Dendritic cell treated with granulocyte-macrophage colony-stimulating factor and Interleukin-4, amounts not matched to agents 40 ng/mL and 50 ng/mL, for 4 days (primary cell): ENCODE measurements at regions of chr2 and their contacts with region 1.

Region 1: GRCh38 chr2:217713395-217714286 is 289.2 kb downstream of the TNS1 start:
- H3K4me3 Mint-ChIP-seq: no peak overlapping the region
- H3K27ac Mint-ChIP-seq: no peak overlapping the region
- H3K4me1 Mint-ChIP-seq: peaks cover 24% of the 10 kb centered on the region
- H3K27me3 Mint-ChIP-seq: peaks cover 53% of the 10 kb centered on the region

Region 2: DNA sequence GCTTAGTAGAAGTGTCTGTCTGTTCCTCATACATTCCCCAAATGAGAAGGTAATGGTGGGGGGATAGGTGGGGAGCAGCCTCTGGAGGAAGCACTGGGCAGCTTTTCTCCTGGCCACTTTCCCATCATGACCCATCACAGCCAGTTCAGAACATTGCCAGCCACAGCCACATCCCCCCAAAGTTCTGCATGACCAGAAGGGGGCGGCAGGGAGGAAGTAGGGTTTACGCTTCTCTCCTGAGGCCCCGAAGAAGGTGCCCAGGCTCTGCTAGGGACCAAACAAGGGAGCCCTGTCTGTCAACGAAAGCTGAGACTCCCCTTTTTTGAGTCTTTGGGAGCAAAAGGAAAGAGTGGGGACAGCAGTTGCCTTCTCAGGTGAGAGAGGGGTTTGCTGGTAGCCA is 1026.0 kb before region 1 on chr2:
- intact Hi-C with region 1: loop called (anchors 5 kb)
- H3K4me3 Mint-ChIP-seq: no peak overlapping the region
- H3K27ac Mint-ChIP-seq: no peak overlapping the region
- H3K4me1 Mint-ChIP-seq: peaks cover 21% of the 10 kb centered on the region
- H3K27me3 Mint-ChIP-seq: peaks cover 69% of the 10 kb centered on the region

Region 3: GRCh38 chr2:217650716-217651360 is 62.8 kb before region 1 on chr2:
- intact Hi-C with region 1: loop called (anchors 1 kb)
- H3K4me3 Mint-ChIP-seq: no peak overlapping the region
- H3K27ac Mint-ChIP-seq: no peak overlapping the region
- H3K4me1 Mint-ChIP-seq: peaks cover 12% of the 10 kb centered on the region
- H3K27me3 Mint-ChIP-seq: peaks cover 12% of the 10 kb centered on the region

Region 4: DNA sequence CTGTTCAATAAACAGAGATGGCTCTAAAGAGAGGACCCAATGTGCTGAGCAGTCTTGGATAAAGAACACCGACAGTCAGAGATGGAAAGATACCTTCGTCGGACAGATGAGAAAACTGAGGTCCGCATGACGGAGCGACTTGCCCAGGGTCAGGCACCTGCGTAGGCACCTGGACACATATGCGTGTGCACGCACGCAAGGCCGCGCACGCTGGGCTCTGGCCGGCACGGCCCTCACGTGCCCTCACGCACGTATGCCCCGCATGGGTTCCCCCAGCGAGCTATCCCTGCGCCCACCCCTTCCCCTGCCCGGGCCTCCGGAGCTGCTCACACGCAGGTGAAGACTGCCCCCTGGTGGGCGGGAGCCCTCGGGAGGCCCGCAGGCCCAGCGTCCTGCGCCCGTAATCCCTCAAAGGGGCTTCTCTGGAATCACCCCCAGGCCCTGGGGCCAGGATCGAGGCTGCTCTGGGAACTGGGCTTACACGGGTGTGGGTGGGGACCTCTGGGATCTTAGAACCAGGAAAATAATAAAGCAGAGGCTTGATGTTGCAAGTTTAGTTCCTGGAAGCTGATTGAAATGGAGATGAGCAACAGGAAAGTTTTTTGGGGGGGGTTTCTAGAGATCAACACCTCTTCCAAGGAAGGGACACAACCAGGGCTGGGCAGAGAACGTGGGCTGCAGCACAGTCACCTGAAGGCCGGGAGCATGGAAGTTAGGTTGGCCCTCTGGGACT is 42.9 kb after region 1 on chr2:
- intact Hi-C with region 1: loop called (anchors 5 kb)
- H3K4me3 Mint-ChIP-seq: no peak overlapping the region
- H3K27ac Mint-ChIP-seq: no peak overlapping the region
- H3K4me1 Mint-ChIP-seq: peaks cover 8% of the 10 kb centered on the region
- H3K27me3 Mint-ChIP-seq: peaks cover 51% of the 10 kb centered on the region